Activated CD4-positive, alpha-beta T cell treated with anti-CD3 and anti-CD28 coated beads for 36 hours (primary cell): ENCODE measurements at regions of chr22 and their contacts with region 1.

Region 1: DNA sequence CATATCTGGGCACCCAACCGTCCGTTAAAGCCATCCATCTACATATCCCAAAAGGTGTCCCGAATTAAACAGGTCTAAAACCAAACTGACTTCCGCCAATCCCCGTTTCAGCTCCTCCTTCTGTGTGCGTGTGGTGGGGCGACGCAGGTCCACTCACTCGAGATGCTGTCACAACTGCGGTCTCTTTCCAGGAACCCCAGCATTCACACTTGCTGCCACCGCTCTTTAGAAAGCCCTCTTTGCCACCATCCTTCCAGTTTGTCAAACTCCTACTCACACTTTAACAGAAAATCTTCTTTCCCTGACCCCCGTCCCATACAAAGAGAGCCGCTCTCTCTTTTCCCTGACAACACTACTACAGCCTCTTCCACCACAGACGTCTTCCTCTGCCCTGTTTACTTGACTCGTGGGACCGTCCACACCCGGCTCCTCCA is 467 bp downstream of the ESS2 start:
- DNase-seq: peak; percentile 69
- ATAC-seq: peak; percentile 37
- H3K4me3 Mint-ChIP-seq: peak overlapping the region; percentile 95
- H3K27ac Mint-ChIP-seq: peak overlapping the region; percentile 96
- H3K4me1 Mint-ChIP-seq: peaks cover 18% of the 10 kb centered on the region
- H3K27me3 Mint-ChIP-seq: peaks cover 5% of the 10 kb centered on the region

Region 2: GRCh38 chr22:19066531-19067271 is 77.3 kb before region 1 on chr22:
- CTCF ChIA-PET with region 1: no interaction called
- POLR2A ChIA-PET with region 1: no interaction called
- intact Hi-C with region 1: no loop called
- DNase-seq: no peak
- ATAC-seq: no peak
- H3K4me3 Mint-ChIP-seq: no peak overlapping the region
- H3K27ac Mint-ChIP-seq: no peak overlapping the region
- H3K4me1 Mint-ChIP-seq: no peaks in the 10 kb centered on the region
- H3K27me3 Mint-ChIP-seq: no peaks in the 10 kb centered on the region

Region 3: DNA sequence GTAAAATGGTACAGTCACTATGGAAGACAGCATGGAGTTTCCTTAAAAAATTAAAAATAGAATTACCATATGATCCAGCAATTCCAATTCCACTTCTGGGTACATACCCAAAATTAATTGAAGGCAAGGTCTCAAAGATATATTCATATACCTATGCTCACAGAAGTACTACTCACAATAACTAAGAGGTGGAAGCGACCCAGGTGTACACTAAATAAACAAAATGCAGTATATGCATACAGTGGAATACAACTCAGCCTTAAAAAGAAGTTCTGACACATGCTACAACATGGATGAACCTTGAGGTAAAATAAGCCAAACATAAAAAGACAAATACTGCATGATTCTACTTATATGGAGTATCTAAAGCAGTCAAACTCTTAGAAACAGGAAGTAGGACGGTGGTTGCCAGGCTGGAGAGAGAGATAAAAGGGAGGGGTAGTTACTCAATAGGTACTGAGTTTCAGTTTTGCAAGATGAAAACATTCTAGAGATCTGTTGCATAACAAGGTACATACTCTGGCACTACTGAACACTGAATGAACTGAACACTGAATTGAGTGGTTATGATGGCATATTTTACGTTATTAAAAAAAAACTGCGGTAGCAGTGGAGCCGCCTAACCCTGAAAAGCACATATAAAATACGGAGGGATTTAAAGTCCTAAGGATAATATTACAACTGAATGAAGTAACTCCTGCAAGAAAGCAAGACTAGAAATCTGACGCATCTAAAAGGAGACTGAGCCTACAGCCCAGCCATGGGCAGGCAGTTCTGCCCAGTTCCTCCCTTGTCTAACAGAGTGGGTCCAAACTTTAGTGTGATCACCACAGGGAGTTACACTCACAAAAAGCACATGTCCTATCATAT is 34.6 kb before region 1 on chr22:
- CTCF ChIA-PET with region 1: interaction called, 7 read pairs
- POLR2A ChIA-PET with region 1: interaction called, 4 read pairs
- intact Hi-C with region 1: loop called in 1 of 2 experiments (anchors 2 kb)
- DNase-seq: peak; percentile 70
- ATAC-seq: peak; percentile 94
- H3K4me3 Mint-ChIP-seq: peak overlapping the region; percentile 5
- H3K27ac Mint-ChIP-seq: peak overlapping the region; percentile 72
- H3K4me1 Mint-ChIP-seq: peaks cover 68% of the 10 kb centered on the region
- H3K27me3 Mint-ChIP-seq: no peaks in the 10 kb centered on the region

Region 4: GRCh38 chr22:19207401-19207808 is 63.4 kb after region 1 on chr22:
- CTCF ChIA-PET with region 1: no interaction called
- POLR2A ChIA-PET with region 1: no interaction called
- intact Hi-C with region 1: no loop called
- DNase-seq: no peak
- ATAC-seq: no peak
- H3K4me3 Mint-ChIP-seq: no peak overlapping the region
- H3K27ac Mint-ChIP-seq: no peak overlapping the region
- H3K4me1 Mint-ChIP-seq: no peaks in the 10 kb centered on the region
- H3K27me3 Mint-ChIP-seq: peaks cover 4% of the 10 kb centered on the region

Region 5: DNA sequence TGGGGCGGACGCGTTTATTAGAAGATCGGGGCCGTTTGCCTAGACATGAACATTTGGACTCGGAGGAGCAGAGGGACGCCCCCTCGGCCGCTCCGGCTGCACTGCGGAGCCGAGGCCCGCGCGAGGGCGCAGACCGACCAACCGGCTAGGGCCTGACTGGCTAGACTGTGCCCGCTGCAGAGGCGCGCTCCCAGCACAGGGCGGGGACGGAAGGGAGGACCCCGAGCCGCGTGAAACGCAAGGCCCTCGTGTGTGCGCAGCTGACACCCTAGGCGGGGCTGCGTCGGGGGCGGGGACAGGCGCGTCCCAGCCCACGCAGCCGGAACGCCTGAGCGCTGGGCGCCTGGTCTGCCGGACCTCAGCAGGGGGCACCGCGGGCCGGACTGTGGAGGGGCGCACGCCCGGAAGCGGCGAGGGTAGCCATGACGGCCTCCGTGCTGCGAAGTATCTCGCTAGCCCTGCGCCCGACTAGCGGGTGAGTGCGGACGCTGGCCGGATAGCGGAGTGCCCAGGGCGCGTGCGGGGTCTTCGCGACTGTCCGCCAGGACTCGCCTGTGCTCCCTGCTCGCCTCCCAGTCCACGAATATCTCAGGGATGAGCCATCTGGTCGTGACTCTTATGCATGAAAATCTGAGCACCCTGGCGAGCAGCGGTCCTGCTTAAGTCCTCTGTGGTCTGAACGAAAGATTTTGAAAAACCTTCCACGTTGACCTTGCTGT is 288.3 kb after region 1 on chr22 and contains the start of gene MRPL40:
- CTCF ChIA-PET with region 1: no interaction called
- POLR2A ChIA-PET with region 1: interaction called, 4 read pairs
- intact Hi-C with region 1: loop called in 1 of 2 experiments (anchors 1 kb)
- DNase-seq: peak; percentile 94
- ATAC-seq: peak; percentile 86
- H3K4me3 Mint-ChIP-seq: peak within 1 kb of the TSS; percentile 75
- H3K27ac Mint-ChIP-seq: peak within 1 kb of the TSS; percentile 96
- H3K4me1 Mint-ChIP-seq: peaks cover 43% of the 10 kb centered on the region
- H3K27me3 Mint-ChIP-seq: no peaks in the 10 kb centered on the region
- total RNA-seq, gene MRPL40: 34.1 to 34.4 TPM

Region 6: GRCh38 chr22:19447388-19448075 is 303.5 kb after region 1 on chr22 and contains the start of gene C22orf39:
- CTCF ChIA-PET with region 1: no interaction called
- POLR2A ChIA-PET with region 1: no interaction called
- intact Hi-C with region 1: loop called (anchors 1 kb)
- DNase-seq: peak; percentile 91
- ATAC-seq: peak; percentile 83
- H3K4me3 Mint-ChIP-seq: peak within 1 kb of the TSS; percentile 87
- H3K27ac Mint-ChIP-seq: peak within 1 kb of the TSS; percentile 98
- H3K4me1 Mint-ChIP-seq: peaks cover 36% of the 10 kb centered on the region
- H3K27me3 Mint-ChIP-seq: no peaks in the 10 kb centered on the region
- total RNA-seq, gene C22orf39: 21.9 to 22.2 TPM

Region 7: DNA sequence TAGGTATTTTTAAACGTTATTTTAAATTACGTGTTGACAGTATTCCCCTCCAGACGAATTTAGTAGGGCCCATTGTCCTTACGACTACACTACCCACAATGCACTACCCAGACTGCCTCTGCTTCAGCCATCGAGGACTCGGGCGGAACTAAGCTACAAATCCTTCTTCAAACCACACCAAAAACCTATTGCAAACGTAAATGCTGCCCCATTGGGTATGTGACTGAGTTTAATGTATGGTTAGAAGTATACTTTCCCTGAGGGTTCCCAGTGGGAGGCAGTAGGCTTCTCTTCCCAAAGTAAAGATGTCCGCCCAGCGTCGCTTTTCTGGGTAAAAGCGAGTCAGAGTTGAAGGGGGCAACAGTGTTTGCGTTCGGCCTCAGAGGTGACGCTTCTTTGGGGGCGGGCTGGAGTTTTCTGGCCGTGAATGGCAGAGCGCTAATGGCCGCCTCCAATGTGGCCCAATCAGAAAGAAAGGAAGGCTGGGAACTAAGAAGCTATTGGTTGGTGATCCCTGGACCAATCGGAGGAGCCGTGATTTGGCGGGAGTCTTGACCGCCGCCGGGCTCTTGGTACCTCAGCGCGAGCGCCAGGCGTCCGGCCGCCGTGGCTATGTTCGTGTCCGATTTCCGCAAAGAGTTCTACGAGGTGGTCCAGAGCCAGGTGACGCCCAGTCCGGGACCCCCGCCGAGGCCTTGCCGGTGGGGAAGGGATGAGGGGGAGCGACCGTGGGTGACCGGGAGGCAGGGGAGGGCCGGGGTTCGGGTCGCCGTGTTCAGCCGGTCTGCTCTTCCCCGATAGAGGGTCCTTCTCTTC is 335.6 kb after region 1 on chr22 and contains the start of gene CDC45:
- CTCF ChIA-PET with region 1: interaction called, 6 read pairs
- POLR2A ChIA-PET with region 1: interaction called, 5 read pairs
- intact Hi-C with region 1: loop called (anchors 1 kb)
- DNase-seq: peak; percentile 97
- ATAC-seq: peak; percentile 91
- H3K4me3 Mint-ChIP-seq: peak within 1 kb of the TSS; percentile 99
- H3K27ac Mint-ChIP-seq: peak within 1 kb of the TSS; percentile 99
- H3K4me1 Mint-ChIP-seq: peaks cover 45% of the 10 kb centered on the region
- H3K27me3 Mint-ChIP-seq: no peaks in the 10 kb centered on the region
- total RNA-seq, gene CDC45: 103 to 111 TPM

Region 8: GRCh38 chr22:19717691-19718455 is 573.9 kb after region 1 on chr22:
- CTCF ChIA-PET with region 1: no interaction called
- POLR2A ChIA-PET with region 1: no interaction called
- intact Hi-C with region 1: loop called in 1 of 2 experiments (anchors 2 kb)
- DNase-seq: peak; percentile 87
- ATAC-seq: peak; percentile 92
- H3K4me3 Mint-ChIP-seq: peak overlapping the region; percentile 63
- H3K27ac Mint-ChIP-seq: no peak overlapping the region
- H3K4me1 Mint-ChIP-seq: peaks cover 11% of the 10 kb centered on the region
- H3K27me3 Mint-ChIP-seq: peaks cover 29% of the 10 kb centered on the region